A549 (cell line): ENCODE measurements at regions of chrX and their contacts with region 1.

Region 1: GRCh38 chrX:124960454-124960853 is 359.2 kb upstream of the TEX13C start:
- DNase-seq: no peak
- ATAC-seq: no peak
- H3K4me3 ChIP-seq: no peak overlapping the region
- H3K27ac ChIP-seq: no peak overlapping the region
- H3K4me1 ChIP-seq: no peaks in the 10 kb centered on the region
- CTCF ChIP-seq: no peak
- EP300 ChIP-seq: no peak
- POLR2A ChIP-seq: no peak
- RAD21 ChIP-seq: no peak

Region 2: DNA sequence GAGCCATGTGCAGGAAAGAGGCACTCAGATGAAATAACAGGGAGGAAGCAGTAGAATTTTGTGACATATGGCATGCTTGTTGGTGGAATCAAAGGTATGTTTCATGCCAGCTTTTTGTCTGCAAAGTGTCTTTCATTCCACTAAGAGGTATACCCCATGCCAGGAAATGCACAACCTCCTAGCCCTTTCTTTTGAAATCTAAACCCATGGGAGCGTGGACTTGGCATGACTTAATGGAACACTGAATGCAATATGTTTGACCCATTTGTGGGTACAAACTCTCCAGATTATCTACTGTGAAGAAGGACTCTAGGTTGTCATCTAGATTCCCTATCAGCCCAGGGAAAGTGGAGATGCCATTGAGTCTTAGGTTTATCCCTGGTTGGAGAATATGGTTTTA is 21.0 kb after region 1 on chrX:
- CTCF ChIA-PET with region 1: no interaction called
- POLR2A ChIA-PET with region 1: interaction called, 10 read pairs
- DNase-seq: no peak
- ATAC-seq: no peak
- H3K4me3 ChIP-seq: no peak overlapping the region
- H3K27ac ChIP-seq: no peak overlapping the region
- H3K4me1 ChIP-seq: no peaks in the 10 kb centered on the region
- CTCF ChIP-seq: no peak
- EP300 ChIP-seq: no peak
- POLR2A ChIP-seq: no peak
- RAD21 ChIP-seq: no peak

Region 3: DNA sequence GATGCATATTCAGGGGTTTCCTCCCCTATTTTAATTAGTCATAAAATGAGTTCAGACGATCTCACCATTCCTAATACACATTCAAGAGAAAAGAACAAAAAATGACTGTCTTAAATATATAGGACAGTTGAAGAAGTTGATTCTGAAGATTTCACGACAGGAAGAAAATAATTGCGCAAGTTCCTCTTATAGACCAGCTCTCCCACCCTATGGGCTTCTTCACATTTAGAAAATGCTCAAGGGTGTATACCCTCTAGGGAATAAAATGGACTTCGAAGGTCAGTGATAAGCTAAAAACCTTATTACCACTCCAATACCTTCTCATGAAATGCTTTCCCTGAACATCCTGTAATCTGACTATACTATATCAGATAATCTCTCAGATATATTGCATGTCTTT is 210.0 kb after region 1 on chrX:
- CTCF ChIA-PET with region 1: no interaction called
- POLR2A ChIA-PET with region 1: no interaction called
- DNase-seq: no peak
- ATAC-seq: no peak
- H3K4me3 ChIP-seq: no peak overlapping the region
- H3K27ac ChIP-seq: no peak overlapping the region
- H3K4me1 ChIP-seq: no peaks in the 10 kb centered on the region
- CTCF ChIP-seq: no peak
- EP300 ChIP-seq: no peak
- POLR2A ChIP-seq: no peak
- RAD21 ChIP-seq: no peak